ENCODE measurements at regions of chr19 and their contacts with region 1.

Region 1: GRCh38 chr19:16041299-16041990 is 34.9 kb upstream of the TPM4 start:
- DNase-seq: peak; percentile 87
- ATAC-seq: peak; percentile 95
- H3K4me3 ChIP-seq: peak overlapping the region; percentile 36
- H3K27ac ChIP-seq: no peak overlapping the region
- H3K4me1 ChIP-seq: 0 out of 2 replicates have a peak, but pooled peaks cover 5% of the 10 kb centered on the region
- H3K27me3 ChIP-seq: no peaks in the 10 kb centered on the region
- CTCF ChIP-seq: peak; percentile 95

Region 2: GRCh38 chr19:16062789-16063188 is 21.3 kb after region 1 on chr19:
- CTCF ChIA-PET with region 1: interaction called, 6 read pairs
- POLR2A ChIA-PET with region 1: interaction called, 3 read pairs
- intact Hi-C with region 1: loop called (anchors 1 kb)
- DNase-seq: peak; percentile 73
- ATAC-seq: no peak
- H3K4me3 ChIP-seq: no peak overlapping the region
- H3K27ac ChIP-seq: no peak overlapping the region
- H3K4me1 ChIP-seq: peaks cover 6% of the 10 kb centered on the region
- H3K27me3 ChIP-seq: no peaks in the 10 kb centered on the region
- CTCF ChIP-seq: peak; percentile 89

Region 3: GRCh38 chr19:16153582-16154336 is 112.3 kb after region 1 on chr19:
- CTCF ChIA-PET with region 1: no interaction called
- POLR2A ChIA-PET with region 1: no interaction called
- intact Hi-C with region 1: no loop called
- DNase-seq: peak; percentile 23
- ATAC-seq: no peak
- H3K4me3 ChIP-seq: no peak overlapping the region
- H3K27ac ChIP-seq: no peak overlapping the region
- H3K4me1 ChIP-seq: no peaks in the 10 kb centered on the region
- H3K27me3 ChIP-seq: no peaks in the 10 kb centered on the region
- CTCF ChIP-seq: no peak

Measured in PC-3 (cell line).